ENCODE measurements at regions of chr2 and their contacts with region 1.

Region 1: DNA sequence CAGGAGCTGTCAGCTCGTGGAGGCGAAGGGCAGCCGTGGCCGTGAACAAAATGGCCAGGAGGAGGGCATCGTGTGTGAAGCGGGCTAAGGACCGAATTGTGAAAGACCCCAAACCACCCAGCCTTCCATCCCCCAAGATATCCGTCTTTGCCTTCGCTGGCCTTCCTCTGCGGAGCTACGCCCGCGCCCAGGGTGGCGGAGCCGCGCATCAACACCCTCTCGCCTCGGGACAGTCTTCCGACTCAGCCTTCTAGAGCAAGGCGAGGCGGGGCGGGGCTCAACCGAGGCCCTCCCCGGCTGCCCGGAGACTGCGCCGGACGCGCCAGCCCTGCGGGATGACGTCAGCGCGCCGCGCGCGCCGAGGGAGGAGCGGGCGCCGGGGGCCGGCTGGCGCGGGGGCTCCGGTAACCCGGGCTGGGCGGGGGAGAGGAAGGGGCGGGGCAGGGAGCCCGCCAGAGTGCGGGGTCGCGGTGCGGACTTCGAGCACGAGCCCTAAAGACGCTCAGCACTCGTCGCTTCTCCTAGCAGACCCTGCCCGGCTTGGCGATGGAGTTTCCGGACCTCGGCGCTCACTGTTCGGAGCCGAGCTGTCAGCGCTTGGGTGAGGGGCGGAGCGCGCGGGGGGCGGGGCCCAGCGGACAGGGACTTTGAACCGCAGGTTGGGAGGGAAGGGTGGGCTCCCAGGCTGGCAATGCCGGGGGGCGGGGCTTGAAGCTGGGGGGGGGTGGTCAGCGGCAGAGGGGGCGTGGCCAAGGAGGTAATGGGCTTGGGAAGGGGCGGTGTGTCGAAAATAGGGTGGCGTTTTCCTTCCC is at the start of gene ZFAND2B:
- DNase-seq: peak; percentile 91 to 98 (median 96)
- ATAC-seq: peak; percentile 94
- H3K4me3 Mint-ChIP-seq: peak within 1 kb of the TSS; percentile 89 to 96 (median 92)
- H3K27ac Mint-ChIP-seq: peak within 1 kb of the TSS; percentile 96 to 100 (median 97)
- H3K4me1 Mint-ChIP-seq: peaks cover 18 to 54% (median 53%) of the 10 kb centered on the region in 4 donors
- H3K27me3 Mint-ChIP-seq: no peaks in the 10 kb centered on the region
- polyA plus RNA-seq, gene ZFAND2B: 78.1 to 85.1 (median 78.1) TPM

Region 2: GRCh38 chr2:219160186-219161017 is 46.2 kb before region 1 on chr2 and contains the start of gene NHEJ1:
- POLR2A ChIA-PET with region 1: interaction called, 30 read pairs
- DNase-seq: peak; percentile 83 to 100 (median 90)
- ATAC-seq: peak; percentile 86 to 90
- H3K4me3 Mint-ChIP-seq: peak within 1 kb of the TSS; percentile 86 to 99 (median 93)
- H3K27ac Mint-ChIP-seq: peak within 1 kb of the TSS; percentile 88 to 99 (median 97)
- H3K4me1 Mint-ChIP-seq: peaks cover 16 to 35% (median 17%) of the 10 kb centered on the region in 4 donors
- H3K27me3 Mint-ChIP-seq: no peaks in the 10 kb centered on the region
- polyA plus RNA-seq, gene NHEJ1: 16.6 to 29.1 (median 23.0) TPM

Region 3: GRCh38 chr2:219186754-219187456 is 19.7 kb before region 1 on chr2:
- POLR2A ChIA-PET with region 1: interaction called, 674 read pairs
- DNase-seq: peak in 1 of 10 donors; percentile 24
- ATAC-seq: no peak
- H3K4me3 Mint-ChIP-seq: no peak overlapping the region
- H3K27ac Mint-ChIP-seq: peak overlapping the region in 9 of 10 donors; percentile 33 to 89 (median 67)
- H3K4me1 Mint-ChIP-seq: peaks cover 15 to 26% (median 24%) of the 10 kb centered on the region in 4 donors
- H3K27me3 Mint-ChIP-seq: no peaks in the 10 kb centered on the region

Region 4: GRCh38 chr2:219229305-219230058 is 22.8 kb after region 1 on chr2 and contains the starts of genes ANKZF1 and ATG9A:
- POLR2A ChIA-PET with region 1: interaction called, 14 read pairs
- DNase-seq: peak; percentile 90 to 99 (median 98)
- ATAC-seq: peak; percentile 95 to 96
- H3K4me3 Mint-ChIP-seq: peak within 1 kb of the TSS; percentile 97 to 99 (median 99)
- H3K27ac Mint-ChIP-seq: peak within 1 kb of the TSS; percentile 96 to 100 (median 98)
- H3K4me1 Mint-ChIP-seq: peaks cover 29 to 78% (median 63%) of the 10 kb centered on the region in 4 donors
- H3K27me3 Mint-ChIP-seq: no peaks in the 10 kb centered on the region
- polyA plus RNA-seq, gene ANKZF1: 23.8 to 46.2 (median 25.9) TPM
- polyA plus RNA-seq, gene ATG9A: 17.7 to 27.9 (median 20.5) TPM

Region 5: DNA sequence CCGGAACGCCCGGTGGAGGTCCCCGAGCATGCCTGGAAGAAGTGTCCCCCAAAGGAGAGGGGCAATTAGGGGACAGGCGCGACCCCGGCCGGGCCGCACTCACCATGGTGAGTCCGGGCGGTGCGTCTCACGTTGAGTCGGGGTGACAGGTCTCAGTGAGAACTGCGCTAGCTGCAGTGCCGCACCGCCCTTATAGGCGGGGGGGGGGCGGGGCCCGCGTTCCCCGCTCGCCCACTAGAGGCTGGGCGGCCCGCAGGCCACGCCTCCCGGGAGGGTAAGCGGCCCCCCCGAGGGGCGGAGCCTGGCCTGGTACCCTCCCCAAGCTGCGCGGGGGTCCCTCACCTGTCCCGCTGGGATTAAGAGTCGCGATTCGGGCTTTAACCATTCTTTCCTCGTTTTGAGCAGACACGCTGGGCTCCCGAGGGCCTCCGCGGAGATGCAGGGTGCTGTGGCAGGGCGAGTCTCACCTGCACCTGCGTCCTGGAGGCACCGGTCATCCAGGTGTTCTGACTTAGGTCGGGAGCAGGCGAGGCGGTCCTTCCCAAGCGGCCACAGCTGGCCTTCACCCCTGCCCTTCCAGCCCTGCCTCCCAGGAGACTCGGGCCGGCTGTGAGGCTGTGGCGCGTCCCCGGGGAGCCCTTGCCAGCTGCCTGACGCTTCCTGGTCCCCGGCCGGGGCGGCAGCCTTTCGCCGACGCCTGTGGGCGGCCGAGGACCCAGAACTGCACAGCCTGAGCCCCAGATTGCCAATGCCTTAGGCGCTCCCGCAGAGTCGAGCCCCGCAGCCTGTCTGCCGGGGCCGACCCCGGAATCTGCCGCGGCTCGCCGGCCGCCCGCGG is 47.3 kb after region 1 on chr2 and contains the start of gene TUBA4A:
- POLR2A ChIA-PET with region 1: interaction called, 134 read pairs
- DNase-seq: peak; percentile 86 to 96 (median 91)
- ATAC-seq: peak; percentile 75 to 77
- H3K4me3 Mint-ChIP-seq: peak within 1 kb of the TSS; percentile 78 to 100 (median 94)
- H3K27ac Mint-ChIP-seq: peak within 1 kb of the TSS; percentile 77 to 99 (median 98)
- H3K4me1 Mint-ChIP-seq: peaks cover 22 to 55% (median 48%) of the 10 kb centered on the region in 4 donors
- H3K27me3 Mint-ChIP-seq: no peaks in the 10 kb centered on the region
- polyA plus RNA-seq, gene TUBA4A: 107 to 275 (median 122) TPM

Region 6: GRCh38 chr2:219294356-219295351 is 88.0 kb after region 1 on chr2:
- POLR2A ChIA-PET with region 1: interaction called, 12 read pairs
- DNase-seq: peak; percentile 79 to 92 (median 90)
- ATAC-seq: peak; percentile 89 to 92
- H3K4me3 Mint-ChIP-seq: peak overlapping the region; percentile 62 to 82 (median 76)
- H3K27ac Mint-ChIP-seq: peak overlapping the region in 9 of 10 donors; percentile 32 to 93 (median 81)
- H3K4me1 Mint-ChIP-seq: peaks cover 13 to 44% (median 37%) of the 10 kb centered on the region in 4 donors
- H3K27me3 Mint-ChIP-seq: peaks cover 0 to 3% (median 0%) of the 10 kb centered on the region in 5 donors

Region 7: GRCh38 chr2:219619235-219619634 is 412.6 kb after region 1 on chr2:
- POLR2A ChIA-PET with region 1: no interaction called
- DNase-seq: no peak
- ATAC-seq: no peak
- H3K4me3 Mint-ChIP-seq: no peak overlapping the region
- H3K27ac Mint-ChIP-seq: no peak overlapping the region
- H3K4me1 Mint-ChIP-seq: peaks cover 0 to 3% (median under 1%) of the 10 kb centered on the region in 4 donors
- H3K27me3 Mint-ChIP-seq: peaks cover 0 to 11% (median 0%) of the 10 kb centered on the region in 5 donors

Measured in naive thymus-derived CD8-positive, alpha-beta T cell (primary cell).